ENCODE measurements at regions of chr9 and their contacts with region 1.

Region 1: GRCh38 chr9:72280913-72281500 is 84.0 kb downstream of the ZFAND5 start:
- DNase-seq: peak; percentile 65 to 76
- H3K4me3 ChIP-seq: no peak overlapping the region
- H3K27ac ChIP-seq: no peak overlapping the region
- H3K4me1 ChIP-seq: no peaks in the 10 kb centered on the region
- H3K27me3 ChIP-seq: no peaks in the 10 kb centered on the region
- CTCF ChIP-seq: peak; percentile 84 to 94 (median 93)
- EP300 ChIP-seq: no peak
- POLR2A ChIP-seq: no peak
- RAD21 ChIP-seq: peak; percentile 98 to 99

Region 2: GRCh38 chr9:72038890-72039410 is 242.1 kb before region 1 on chr9:
- CTCF ChIA-PET with region 1: interaction called, 67 read pairs
- POLR2A ChIA-PET with region 1: no interaction called
- DNase-seq: peak; percentile 77 to 92
- H3K4me3 ChIP-seq: no peak overlapping the region
- H3K27ac ChIP-seq: no peak overlapping the region
- H3K4me1 ChIP-seq: no peaks in the 10 kb centered on the region
- H3K27me3 ChIP-seq: no peaks in the 10 kb centered on the region
- CTCF ChIP-seq: peak; percentile 93 to 99 (median 95)
- EP300 ChIP-seq: no peak
- POLR2A ChIP-seq: no peak
- RAD21 ChIP-seq: peak; percentile 100

Region 3: DNA sequence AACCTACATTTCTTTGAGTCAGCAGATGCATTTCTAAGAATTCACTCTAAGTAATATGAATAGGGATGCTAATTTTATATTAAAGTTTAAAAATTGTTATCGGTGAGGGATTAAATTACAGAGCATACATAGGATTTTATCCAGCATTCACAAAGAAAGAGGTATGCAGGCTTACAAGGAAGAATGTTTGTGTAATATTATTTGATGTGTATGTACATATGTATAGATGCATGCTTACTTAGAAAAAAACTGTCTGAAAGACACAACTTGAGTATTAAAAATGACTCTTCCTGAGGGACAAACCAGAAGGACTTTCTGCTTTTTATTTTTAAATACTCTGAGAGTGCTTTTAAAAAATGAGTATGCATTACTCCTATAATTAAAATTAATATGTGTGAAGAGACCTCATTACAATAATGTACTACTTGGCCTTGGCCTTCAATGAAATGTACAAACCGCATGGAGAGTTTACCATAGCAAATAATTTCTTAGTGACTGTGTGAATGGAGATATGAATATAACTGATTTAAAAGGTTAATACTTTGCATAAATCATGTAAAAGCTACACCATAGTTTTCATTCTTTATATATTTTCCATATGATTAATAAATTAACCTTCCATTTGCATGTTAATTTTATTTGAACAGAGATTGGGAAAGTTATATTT is 54.7 kb before region 1 on chr9:
- CTCF ChIA-PET with region 1: no interaction called
- POLR2A ChIA-PET with region 1: no interaction called
- DNase-seq: no peak
- H3K4me3 ChIP-seq: no peak overlapping the region
- H3K27ac ChIP-seq: no peak overlapping the region
- H3K4me1 ChIP-seq: no peaks in the 10 kb centered on the region
- H3K27me3 ChIP-seq: no peaks in the 10 kb centered on the region
- CTCF ChIP-seq: no peak
- EP300 ChIP-seq: no peak
- POLR2A ChIP-seq: no peak
- RAD21 ChIP-seq: no peak

Region 4: GRCh38 chr9:72292256-72292682 is 11.3 kb after region 1 on chr9:
- CTCF ChIA-PET with region 1: interaction called, 26 read pairs
- POLR2A ChIA-PET with region 1: no interaction called
- DNase-seq: no peak
- H3K4me3 ChIP-seq: no peak overlapping the region
- H3K27ac ChIP-seq: no peak overlapping the region
- H3K4me1 ChIP-seq: no peaks in the 10 kb centered on the region
- H3K27me3 ChIP-seq: no peaks in the 10 kb centered on the region
- CTCF ChIP-seq: peak in 2 of 3 experiments; percentile 19 to 37; a peak in 2 of 4 replicates
- EP300 ChIP-seq: no peak
- POLR2A ChIP-seq: no peak
- RAD21 ChIP-seq: peak in 1 of 2 experiments; percentile 28; a peak in 2 of 4 replicates

Region 5: GRCh38 chr9:72364679-72365524 is 83.9 kb after region 1 on chr9 and contains the start of gene ZFAND5:
- CTCF ChIA-PET with region 1: interaction called, 4 read pairs
- POLR2A ChIA-PET with region 1: interaction called, 12 read pairs
- DNase-seq: peak; percentile 90 to 94
- H3K4me3 ChIP-seq: peak within 1 kb of the TSS; percentile 84 to 99 (median 96)
- H3K27ac ChIP-seq: peak within 1 kb of the TSS; percentile 93
- H3K4me1 ChIP-seq: peaks cover 0 to 8% (median 0%) of the 10 kb centered on the region in 4 experiments; a peak in 4 of 7 replicates
- H3K27me3 ChIP-seq: no peaks in the 10 kb centered on the region
- CTCF ChIP-seq: no peak; a peak in 1 of 4 replicates
- EP300 ChIP-seq: peak; percentile 49 to 55; a peak in 2 of 3 replicates
- POLR2A ChIP-seq: peak; percentile 99 to 100
- RAD21 ChIP-seq: peak in 1 of 2 experiments; percentile 8; a peak in 3 of 4 replicates
- total RNA-seq, gene ZFAND5: 209 and 225 TPM in 2 replicates

Region 6: GRCh38 chr9:72383978-72384709 is 103.1 kb after region 1 on chr9:
- CTCF ChIA-PET with region 1: no interaction called
- POLR2A ChIA-PET with region 1: no interaction called
- DNase-seq: no peak
- H3K4me3 ChIP-seq: no peak overlapping the region
- H3K27ac ChIP-seq: no peak overlapping the region
- H3K4me1 ChIP-seq: no peaks in the 10 kb centered on the region; a peak in 1 of 7 replicates
- H3K27me3 ChIP-seq: no peaks in the 10 kb centered on the region
- CTCF ChIP-seq: no peak
- EP300 ChIP-seq: no peak
- POLR2A ChIP-seq: no peak
- RAD21 ChIP-seq: no peak

Region 7: DNA sequence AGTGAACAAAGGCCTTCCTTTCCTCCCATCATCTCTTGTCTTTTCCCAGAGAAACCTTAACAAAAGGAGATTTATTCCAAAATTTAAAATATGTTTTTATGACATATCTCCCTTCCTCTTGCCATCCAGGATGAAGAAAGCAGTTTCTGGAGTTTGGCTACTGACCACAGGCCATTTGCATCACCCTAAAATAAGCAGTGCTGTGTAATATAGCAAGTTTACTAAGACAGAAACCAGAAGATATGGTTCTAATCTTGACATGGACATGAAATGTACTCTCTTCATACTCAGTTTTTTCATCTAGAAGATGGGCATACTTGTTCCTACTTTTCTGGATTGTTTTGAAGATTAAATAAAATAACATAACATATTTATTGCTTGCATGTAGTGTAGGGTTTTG is 134.2 kb after region 1 on chr9:
- CTCF ChIA-PET with region 1: no interaction called
- POLR2A ChIA-PET with region 1: no interaction called
- DNase-seq: no peak
- H3K4me3 ChIP-seq: no peak overlapping the region
- H3K27ac ChIP-seq: no peak overlapping the region
- H3K4me1 ChIP-seq: no peaks in the 10 kb centered on the region
- H3K27me3 ChIP-seq: no peaks in the 10 kb centered on the region
- CTCF ChIP-seq: no peak
- EP300 ChIP-seq: no peak
- POLR2A ChIP-seq: no peak
- RAD21 ChIP-seq: no peak

Region 8: DNA sequence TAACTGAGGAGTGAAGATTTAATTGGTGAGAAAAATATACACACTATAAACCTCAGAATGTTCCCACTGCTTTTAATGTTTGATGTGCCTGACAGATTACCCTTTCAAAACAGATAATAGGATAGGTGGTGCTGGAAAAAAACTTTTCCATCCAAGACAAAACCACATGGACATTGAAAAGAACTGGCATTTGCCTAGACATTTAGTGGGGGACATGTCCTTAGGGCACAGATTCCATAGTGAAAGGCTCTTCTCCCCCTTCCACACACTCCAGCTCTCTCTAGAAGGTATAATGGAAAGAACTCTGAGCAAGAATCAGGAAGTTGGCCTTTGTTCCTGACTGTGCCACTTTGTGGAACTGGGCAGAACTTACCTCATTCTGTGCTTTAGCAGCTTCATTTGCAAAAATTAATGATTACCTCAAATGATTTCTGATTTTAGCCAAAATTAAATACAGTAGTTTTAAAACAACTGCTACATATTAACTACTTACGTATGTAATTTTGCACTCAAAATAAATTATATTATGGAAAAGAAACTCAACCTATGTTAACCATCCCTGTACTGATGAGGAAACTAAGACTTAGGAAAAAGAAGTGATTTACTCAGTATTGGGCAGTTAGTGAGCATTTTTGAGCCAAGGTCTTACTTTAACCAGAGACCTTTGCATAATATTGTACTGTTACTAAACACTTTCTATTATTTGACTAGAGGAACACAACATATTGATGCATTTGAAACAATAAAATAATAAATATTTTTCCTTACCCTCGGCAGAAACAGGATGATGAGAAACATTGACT is 283.7 kb after region 1 on chr9:
- CTCF ChIA-PET with region 1: no interaction called
- POLR2A ChIA-PET with region 1: no interaction called
- DNase-seq: no peak
- H3K4me3 ChIP-seq: no peak overlapping the region
- H3K27ac ChIP-seq: no peak overlapping the region
- H3K4me1 ChIP-seq: no peaks in the 10 kb centered on the region
- H3K27me3 ChIP-seq: no peaks in the 10 kb centered on the region
- CTCF ChIP-seq: no peak
- EP300 ChIP-seq: no peak
- POLR2A ChIP-seq: no peak
- RAD21 ChIP-seq: no peak

Region 9: DNA sequence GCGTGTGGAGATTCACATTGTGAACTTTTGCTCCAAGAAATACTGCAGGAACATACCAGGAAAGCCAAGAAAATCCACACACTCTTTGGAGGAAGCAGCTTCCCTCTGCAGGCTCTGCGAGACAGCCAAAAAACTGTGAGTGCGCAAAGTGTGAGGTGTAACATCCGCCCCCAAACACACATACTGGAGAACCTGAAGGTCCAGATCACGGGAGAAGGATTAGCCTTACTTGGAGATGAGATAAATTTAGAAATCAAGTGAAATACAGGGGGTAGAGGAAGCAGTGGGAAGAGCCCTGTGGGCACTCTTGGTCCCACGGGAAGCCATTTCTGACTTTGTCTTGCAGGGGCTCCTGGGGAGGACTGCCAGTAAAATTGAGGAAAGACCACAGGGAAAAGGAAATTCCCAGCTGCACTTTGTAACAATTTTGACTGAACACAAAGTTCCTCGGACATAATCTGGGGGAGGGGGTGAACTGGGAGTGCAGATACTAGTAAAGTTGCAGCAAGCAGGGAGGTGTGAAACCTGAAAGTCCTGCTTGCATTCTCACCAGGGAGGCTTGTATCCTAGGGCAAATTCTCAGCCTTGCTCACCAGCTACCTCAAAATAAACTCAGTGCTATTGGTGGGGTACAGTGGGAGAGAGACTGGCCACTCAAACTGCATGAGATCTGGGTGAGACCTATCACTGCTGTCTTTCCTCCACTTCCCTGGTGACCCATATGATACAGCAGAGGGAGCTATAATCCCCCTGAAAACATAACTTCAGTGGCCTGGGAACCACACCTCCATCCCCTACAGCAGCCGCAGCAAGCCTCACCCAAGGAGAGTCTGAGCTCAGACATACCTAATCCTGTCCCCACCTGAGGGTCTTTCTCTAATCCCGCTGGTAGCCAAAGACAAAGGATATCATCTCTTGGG is 562.8 kb after region 1 on chr9:
- CTCF ChIA-PET with region 1: interaction called, 10 read pairs
- POLR2A ChIA-PET with region 1: no interaction called
- DNase-seq: no peak
- H3K4me3 ChIP-seq: no peak overlapping the region
- H3K27ac ChIP-seq: no peak overlapping the region
- H3K4me1 ChIP-seq: peaks cover 0 to 2% (median 0%) of the 10 kb centered on the region in 4 experiments; a peak in 1 of 7 replicates
- H3K27me3 ChIP-seq: no peaks in the 10 kb centered on the region
- CTCF ChIP-seq: peak in 2 of 3 experiments; percentile 20 to 58; a peak in 3 of 4 replicates
- EP300 ChIP-seq: no peak
- POLR2A ChIP-seq: no peak
- RAD21 ChIP-seq: peak; percentile 54 to 61

Measured in H1 (cell line).